ENCODE measurements at regions of chr11 and their contacts with region 1.

Region 1: DNA sequence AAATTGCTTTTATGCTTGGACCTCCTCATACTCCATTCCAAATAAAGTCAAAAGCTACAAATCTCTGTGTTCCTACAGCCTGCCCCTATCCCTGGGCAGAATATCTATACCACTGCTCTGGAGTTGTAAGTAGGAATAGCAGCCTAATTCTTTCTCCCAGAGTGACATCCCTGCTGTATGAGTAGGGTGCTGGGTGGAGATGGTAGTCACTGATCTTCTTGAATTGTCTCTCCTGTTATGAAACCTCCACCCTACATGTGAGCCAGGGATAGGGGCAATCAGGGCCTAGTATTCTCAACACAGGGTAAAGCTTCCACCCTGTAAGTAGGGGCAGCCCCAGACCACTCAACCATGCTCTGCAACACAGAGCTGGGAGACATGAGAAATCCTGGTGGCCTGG is 19.8 kb downstream of the GALNT18 start:
- DNase-seq: no peak
- ATAC-seq: no peak
- H3K4me3 ChIP-seq: no peak overlapping the region
- H3K27ac ChIP-seq: no peak overlapping the region
- H3K4me1 ChIP-seq: no peaks in the 10 kb centered on the region
- H3K27me3 ChIP-seq: no peaks in the 10 kb centered on the region

Region 2: GRCh38 chr11:11476971-11477645 is 124.9 kb before region 1 on chr11:
- intact Hi-C with region 1: no loop called
- DNase-seq: peak in 1 of 2 donors; percentile 57
- ATAC-seq: peak; percentile 49
- H3K4me3 ChIP-seq: no peak overlapping the region
- H3K27ac ChIP-seq: no peak overlapping the region
- H3K4me1 ChIP-seq: peaks cover 0 to 9% of the 10 kb centered on the region in 2 donors
- H3K27me3 ChIP-seq: no peaks in the 10 kb centered on the region

Region 3: GRCh38 chr11:11543656-11544055 is 58.4 kb before region 1 on chr11:
- intact Hi-C with region 1: loop called in 1 of 2 experiments (anchors 2 kb)
- DNase-seq: no peak
- ATAC-seq: no peak
- H3K4me3 ChIP-seq: no peak overlapping the region
- H3K27ac ChIP-seq: no peak overlapping the region
- H3K4me1 ChIP-seq: peaks cover 0 to 1% of the 10 kb centered on the region in 2 donors
- H3K27me3 ChIP-seq: no peaks in the 10 kb centered on the region